ENCODE measurements at regions of chr6 and their contacts with region 1.

Region 1: GRCh38 chr6:55445648-55446204 is 118.5 kb downstream of the GFRAL start:
- DNase-seq: no peak
- H3K4me3 ChIP-seq: no peak overlapping the region
- H3K27me3 ChIP-seq: no peaks in the 10 kb centered on the region
- CTCF ChIP-seq: peak; percentile 54

Region 2: GRCh38 chr6:55456016-55456415 is 10.3 kb after region 1 on chr6:
- CTCF ChIA-PET with region 1: interaction called, 19 read pairs
- POLR2A ChIA-PET with region 1: no interaction called
- DNase-seq: no peak
- H3K4me3 ChIP-seq: no peak overlapping the region
- H3K27me3 ChIP-seq: no peaks in the 10 kb centered on the region
- CTCF ChIP-seq: no peak

Region 3: DNA sequence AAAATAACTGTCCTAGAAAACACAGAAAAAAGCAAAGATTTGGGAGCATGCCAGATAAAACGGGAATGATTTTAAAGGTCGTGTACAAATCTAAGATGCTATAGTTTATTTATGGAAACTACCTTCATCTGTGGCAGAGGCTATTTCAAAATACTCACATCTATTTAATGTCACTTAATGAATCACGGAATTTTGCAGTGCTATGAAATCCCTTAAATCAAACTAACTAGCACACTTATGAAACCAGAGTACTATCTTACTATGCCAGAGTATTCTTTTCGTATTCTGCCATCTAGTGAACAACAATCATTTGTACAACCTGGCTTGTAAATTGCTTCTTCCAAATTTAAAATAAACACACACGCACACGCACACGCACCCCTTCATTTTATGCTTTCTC is 507.6 kb after region 1 on chr6:
- CTCF ChIA-PET with region 1: interaction called, 10 read pairs
- POLR2A ChIA-PET with region 1: no interaction called
- DNase-seq: peak; percentile 30
- H3K4me3 ChIP-seq: no peak overlapping the region
- H3K27me3 ChIP-seq: no peaks in the 10 kb centered on the region; the same call in 1 of the 2 replicates
- CTCF ChIP-seq: peak; percentile 47; the same call in 1 of the 2 replicates

Measured in BJ (cell line).